Gastrocnemius medialis (tissue), 4 donors: ENCODE measurements at regions of chr1 and their contacts with region 1.

Region 1: GRCh38 chr1:11838349-11839272 is 9.0 kb downstream of the NPPA start:
- DNase-seq: peak; percentile 45 to 62
- ATAC-seq: peak; percentile 66 to 87
- H3K4me3 ChIP-seq: no peak overlapping the region
- H3K27ac ChIP-seq: no peak overlapping the region
- H3K4me1 ChIP-seq: no peaks in the 10 kb centered on the region
- H3K27me3 ChIP-seq: no peaks in the 10 kb centered on the region
- CTCF ChIP-seq: peak; percentile 93 to 99 (median 98)
- POLR2A ChIP-seq: no peak

Region 2: GRCh38 chr1:11893907-11894251 is 55.3 kb after region 1 on chr1:
- in situ Hi-C with region 1: loop called in 3 of 4 experiments (anchors 5 to 10 kb)
- intact Hi-C with region 1: loop called (anchors 1 kb)
- DNase-seq: peak in 1 of 2 donors; percentile 48
- ATAC-seq: peak; percentile 87 to 90
- H3K4me3 ChIP-seq: no peak overlapping the region
- H3K27ac ChIP-seq: no peak overlapping the region
- H3K4me1 ChIP-seq: no peaks in the 10 kb centered on the region
- H3K27me3 ChIP-seq: peaks cover 13 to 21% (median 20%) of the 10 kb centered on the region in 3 donors
- CTCF ChIP-seq: peak; percentile 88 to 94 (median 91)
- POLR2A ChIP-seq: no peak

Region 3: GRCh38 chr1:11898831-11899467 is 60.3 kb after region 1 on chr1:
- in situ Hi-C with region 1: loop called (anchors 5 to 10 kb)
- intact Hi-C with region 1: loop called (anchors 1 kb)
- DNase-seq: no peak
- ATAC-seq: no peak
- H3K4me3 ChIP-seq: no peak overlapping the region
- H3K27ac ChIP-seq: no peak overlapping the region
- H3K4me1 ChIP-seq: no peaks in the 10 kb centered on the region
- H3K27me3 ChIP-seq: peaks cover 18 to 28% (median 24%) of the 10 kb centered on the region in 3 donors
- CTCF ChIP-seq: no peak
- POLR2A ChIP-seq: no peak

Region 4: GRCh38 chr1:11907275-11908094 is 68.9 kb after region 1 on chr1:
- in situ Hi-C with region 1: loop called in 1 of 4 experiments (anchors 5 kb)
- intact Hi-C with region 1: no loop called
- DNase-seq: peak; percentile 84 to 94
- ATAC-seq: peak; percentile 72 to 74
- H3K4me3 ChIP-seq: peak overlapping the region in 2 of 4 donors; percentile 86 to 93
- H3K27ac ChIP-seq: peak overlapping the region; percentile 95 to 99 (median 98)
- H3K4me1 ChIP-seq: no peaks in the 10 kb centered on the region
- H3K27me3 ChIP-seq: no peaks in the 10 kb centered on the region
- CTCF ChIP-seq: peak; percentile 78 to 93 (median 87)
- POLR2A ChIP-seq: no peak

Region 5: DNA sequence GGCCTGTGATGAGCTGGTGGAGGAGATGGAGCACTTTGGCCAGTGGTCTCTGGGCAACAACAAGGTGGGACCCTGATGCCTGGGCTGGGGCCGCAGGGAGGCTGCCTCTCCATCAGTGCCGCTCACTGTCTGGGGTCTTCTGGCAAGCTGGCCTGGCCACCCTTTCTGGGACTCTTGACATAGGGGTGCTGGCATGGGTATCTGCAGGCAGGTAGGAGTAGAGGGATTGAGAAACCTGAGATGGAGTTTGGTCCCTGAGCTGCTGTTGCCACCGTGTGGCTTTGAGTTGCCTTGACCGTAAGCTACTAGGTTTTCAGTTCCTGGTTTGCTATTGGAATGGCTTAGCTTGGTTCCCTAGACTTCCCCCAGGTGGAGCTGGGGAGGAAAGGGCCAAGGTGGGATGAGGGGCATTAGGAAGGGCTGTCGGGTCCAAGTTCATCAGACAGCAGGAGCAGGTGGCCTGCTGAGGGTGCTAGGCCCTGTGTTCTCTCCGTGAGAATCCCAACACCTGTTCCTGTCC is 128.5 kb after region 1 on chr1:
- in situ Hi-C with region 1: loop called (anchors 10 to 25 kb)
- intact Hi-C with region 1: loop called (anchors 1 kb)
- DNase-seq: peak in 1 of 2 donors; percentile 64
- ATAC-seq: peak; percentile 76 to 94
- H3K4me3 ChIP-seq: no peak overlapping the region
- H3K27ac ChIP-seq: peak overlapping the region in 2 of 4 donors; percentile 23 to 38
- H3K4me1 ChIP-seq: no peaks in the 10 kb centered on the region
- H3K27me3 ChIP-seq: no peaks in the 10 kb centered on the region
- CTCF ChIP-seq: peak; percentile 33 to 64 (median 56)
- POLR2A ChIP-seq: no peak

Region 6: GRCh38 chr1:12031039-12031980 is 192.7 kb after region 1 on chr1:
- in situ Hi-C with region 1: no loop called
- intact Hi-C with region 1: loop called (anchors 2 kb)
- DNase-seq: no peak
- ATAC-seq: peak in 1 of 2 donors; percentile 39
- H3K4me3 ChIP-seq: no peak overlapping the region
- H3K27ac ChIP-seq: no peak overlapping the region
- H3K4me1 ChIP-seq: no peaks in the 10 kb centered on the region
- H3K27me3 ChIP-seq: no peaks in the 10 kb centered on the region
- CTCF ChIP-seq: peak in 3 of 5 experiments; percentile 43 to 57 (median 46)
- POLR2A ChIP-seq: no peak

Region 7: GRCh38 chr1:12208764-12209494 is 370.3 kb after region 1 on chr1:
- in situ Hi-C with region 1: loop called in 1 of 4 experiments (anchors 25 kb)
- intact Hi-C with region 1: no loop called
- DNase-seq: peak; percentile 57 to 79
- ATAC-seq: peak; percentile 90 to 91
- H3K4me3 ChIP-seq: no peak overlapping the region
- H3K27ac ChIP-seq: peak overlapping the region in 1 of 4 donors; percentile 8
- H3K4me1 ChIP-seq: peaks cover 0 to 3% of the 10 kb centered on the region in 2 donors
- H3K27me3 ChIP-seq: no peaks in the 10 kb centered on the region
- CTCF ChIP-seq: peak; percentile 93 to 96 (median 96)
- POLR2A ChIP-seq: no peak